Endothelial cell of umbilical vein (primary cell): ENCODE measurements at regions of chr10 and their contacts with region 1.

Region 1: GRCh38 chr10:52351914-52352330 is 37.8 kb downstream of the DKK1 start:
- DNase-seq: peak; percentile 37
- H3K4me3 ChIP-seq: no peak overlapping the region
- H3K27ac ChIP-seq: peak overlapping the region; percentile 11
- H3K4me1 ChIP-seq: peaks cover 16% of the 10 kb centered on the region
- H3K27me3 ChIP-seq: no peaks in the 10 kb centered on the region
- CTCF ChIP-seq: no peak
- POLR2A ChIP-seq: no peak

Region 2: GRCh38 chr10:52121688-52122087 is 230.2 kb before region 1 on chr10:
- CTCF ChIA-PET with region 1: no interaction called
- POLR2A ChIA-PET with region 1: no interaction called
- dilution Hi-C with region 1: no loop called
- intact Hi-C with region 1: no loop called
- DNase-seq: no peak
- H3K4me3 ChIP-seq: no peak overlapping the region
- H3K27ac ChIP-seq: no peak overlapping the region
- H3K4me1 ChIP-seq: no peaks in the 10 kb centered on the region
- H3K27me3 ChIP-seq: no peaks in the 10 kb centered on the region
- CTCF ChIP-seq: no peak
- POLR2A ChIP-seq: no peak

Region 3: GRCh38 chr10:52334595-52334994 is 17.3 kb before region 1 on chr10:
- CTCF ChIA-PET with region 1: interaction called, 5 read pairs
- POLR2A ChIA-PET with region 1: no interaction called
- dilution Hi-C with region 1: no loop called
- intact Hi-C with region 1: loop called (anchors 1 kb)
- DNase-seq: peak; percentile 62
- H3K4me3 ChIP-seq: peak overlapping the region in 1 of 3 experiments; percentile 21
- H3K27ac ChIP-seq: peak overlapping the region; percentile 81
- H3K4me1 ChIP-seq: peaks cover 57% of the 10 kb centered on the region
- H3K27me3 ChIP-seq: no peaks in the 10 kb centered on the region
- CTCF ChIP-seq: no peak
- POLR2A ChIP-seq: no peak

Region 4: GRCh38 chr10:52455071-52455470 is 103.1 kb after region 1 on chr10:
- CTCF ChIA-PET with region 1: no interaction called
- POLR2A ChIA-PET with region 1: no interaction called
- dilution Hi-C with region 1: no loop called
- intact Hi-C with region 1: no loop called
- DNase-seq: no peak
- H3K4me3 ChIP-seq: no peak overlapping the region
- H3K27ac ChIP-seq: no peak overlapping the region
- H3K4me1 ChIP-seq: no peaks in the 10 kb centered on the region
- H3K27me3 ChIP-seq: no peaks in the 10 kb centered on the region
- CTCF ChIP-seq: no peak
- POLR2A ChIP-seq: no peak